ENCODE measurements at regions of chr1 and their contacts with region 1.

Region 1: GRCh38 chr1:186985889-186986491 is 157.2 kb downstream of the PLA2G4A start:
- DNase-seq: peak; percentile 66

Region 2: GRCh38 chr1:186618401-186619170 is 367.4 kb before region 1 on chr1:
- in situ Hi-C with region 1: loop called (anchors 10 kb)
- DNase-seq: peak; percentile 79

Region 3: DNA sequence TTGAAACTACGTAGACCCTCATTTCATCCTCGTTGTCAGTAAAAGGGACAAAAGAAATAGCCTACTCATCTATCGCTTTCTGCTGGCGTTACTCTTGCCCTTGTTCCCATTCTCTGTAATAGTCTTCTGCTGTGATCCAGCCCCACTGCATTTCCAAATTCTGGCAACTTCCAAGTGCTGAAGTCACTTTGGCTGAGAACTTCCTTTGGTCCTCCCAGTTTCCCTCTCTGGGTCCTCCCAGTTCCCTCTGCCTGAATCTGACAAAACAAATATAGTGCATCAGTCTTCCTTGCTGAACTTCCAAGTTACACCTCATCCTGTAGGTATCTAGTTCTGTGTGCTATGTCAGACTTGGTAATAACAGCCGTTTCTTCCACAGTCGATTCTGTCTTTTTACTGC is 204.3 kb before region 1 on chr1:
- in situ Hi-C with region 1: no loop called
- DNase-seq: no peak

Measured in KBM-7 (cell line).